Activated CD8-positive, alpha-beta T cell treated with anti-CD3 and anti-CD28 coated beads for 36 hours (primary cell): ENCODE measurements at regions of chr7 and their contacts with region 1.

Region 1: DNA sequence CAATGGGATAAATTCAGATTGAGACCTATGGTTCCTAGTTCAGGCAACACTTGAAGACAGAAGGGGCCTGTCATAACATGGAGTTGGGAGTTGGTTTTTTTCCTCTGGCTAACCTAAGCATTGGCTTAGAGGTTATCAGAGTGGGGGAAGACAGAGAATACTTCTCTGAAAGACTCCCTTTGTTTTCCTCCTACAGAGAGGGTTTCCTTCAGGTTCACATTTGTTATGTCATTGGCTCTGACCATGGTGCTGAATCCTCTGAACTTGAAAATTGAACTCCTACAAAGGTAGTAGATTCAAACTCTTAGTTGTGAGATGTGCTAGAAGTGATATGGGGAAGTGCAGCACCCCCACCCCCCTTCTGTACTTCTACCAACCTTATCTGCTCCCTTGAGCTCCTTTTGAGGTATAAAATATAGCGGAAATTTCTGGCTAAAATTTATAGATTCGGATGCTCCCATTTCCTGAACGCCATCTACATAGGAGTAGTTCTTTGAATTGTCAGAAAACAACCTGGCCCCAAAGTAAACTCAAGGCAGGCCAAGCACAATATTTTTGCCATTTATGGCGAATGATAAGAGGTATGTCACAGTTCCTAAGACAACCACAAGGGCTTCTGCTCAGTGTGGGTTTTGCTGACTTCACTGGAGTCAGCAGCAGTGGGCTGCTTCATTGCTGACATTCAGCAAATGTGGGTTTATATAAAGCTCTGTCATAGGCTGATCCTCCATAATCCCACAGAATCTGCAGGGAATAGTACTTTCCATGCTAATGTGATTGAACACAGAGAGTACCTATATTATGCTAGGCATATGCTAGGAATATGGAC is 131.6 kb upstream of the KLF14 start:
- DNase-seq: no peak
- ATAC-seq: peak; percentile 37
- H3K4me3 Mint-ChIP-seq: no peak overlapping the region
- H3K27ac Mint-ChIP-seq: no peak overlapping the region
- H3K4me1 Mint-ChIP-seq: peaks cover 2% of the 10 kb centered on the region
- H3K27me3 Mint-ChIP-seq: no peaks in the 10 kb centered on the region
- CTCF ChIP-seq: no peak

Region 2: DNA sequence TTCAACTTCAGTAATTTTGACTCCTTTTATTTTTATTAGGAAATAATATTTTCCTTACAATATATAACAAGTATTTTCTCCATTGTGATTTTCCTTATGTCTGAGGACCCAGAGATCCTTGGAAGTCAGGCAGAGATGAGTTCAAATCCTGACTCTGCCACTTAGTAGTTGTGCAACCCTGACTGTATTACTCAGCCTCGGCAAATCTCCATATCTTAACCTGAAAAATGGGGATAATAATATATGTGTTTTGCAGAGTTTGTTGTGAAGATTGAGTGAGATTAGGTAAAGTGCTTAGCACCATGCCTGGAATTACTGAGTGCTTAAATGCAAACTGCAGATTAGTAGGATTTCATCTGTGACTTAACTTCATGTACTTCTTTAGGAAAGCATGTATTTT is 11.1 kb before region 1 on chr7:
- CTCF ChIA-PET with region 1: interaction called, 3 read pairs
- POLR2A ChIA-PET with region 1: interaction called, 10 read pairs
- intact Hi-C with region 1: no loop called
- DNase-seq: no peak
- ATAC-seq: no peak
- H3K4me3 Mint-ChIP-seq: no peak overlapping the region
- H3K27ac Mint-ChIP-seq: no peak overlapping the region
- H3K4me1 Mint-ChIP-seq: no peaks in the 10 kb centered on the region
- H3K27me3 Mint-ChIP-seq: no peaks in the 10 kb centered on the region
- CTCF ChIP-seq: no peak